ENCODE measurements at regions of chr11 and their contacts with region 1.

Region 1: DNA sequence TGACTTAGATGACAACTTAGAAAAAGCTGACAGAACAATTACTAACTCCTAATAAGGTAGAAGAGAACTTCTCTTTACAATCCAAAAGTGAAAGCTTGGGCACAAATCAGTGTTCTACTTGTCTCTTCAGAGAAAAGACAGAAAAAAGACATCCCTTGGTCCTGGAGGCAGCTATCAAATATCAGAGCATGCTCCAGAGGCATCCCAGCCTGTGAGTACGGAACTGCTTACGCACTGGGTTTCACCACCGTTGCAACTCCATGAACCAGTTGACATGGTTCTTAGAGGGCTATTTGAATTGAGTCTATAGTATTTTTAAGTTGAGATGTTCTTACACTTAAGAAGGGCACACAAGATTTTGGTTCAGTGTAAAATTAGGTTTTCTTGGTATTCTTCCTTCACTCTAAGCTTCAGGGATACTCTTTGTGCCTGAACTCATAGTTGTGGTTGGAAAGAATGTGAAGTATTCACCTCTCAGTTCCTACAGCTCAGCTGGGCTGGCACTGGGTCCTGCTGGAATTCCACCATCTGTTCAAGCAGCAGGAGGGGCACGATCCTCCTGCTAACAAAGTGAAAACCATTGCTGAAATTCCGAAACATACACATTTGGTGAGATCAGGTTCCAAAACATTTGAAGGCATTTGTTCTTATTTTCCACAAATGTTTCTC is 6.3 kb downstream of the AKIP1 start:
- DNase-seq: peak in 1 of 5 donors; percentile 36
- ATAC-seq: peak in 3 of 4 donors; percentile 39 to 64 (median 59)
- H3K4me3 ChIP-seq: no peak overlapping the region
- H3K27ac ChIP-seq: peak overlapping the region in 7 of 12 donors; percentile 3 to 49 (median 27)
- H3K4me1 ChIP-seq: peaks cover 0 to 41% (median 30%) of the 10 kb centered on the region in 12 donors
- H3K27me3 ChIP-seq: no peaks in the 10 kb centered on the region
- CTCF ChIP-seq: no peak
- POLR2A ChIP-seq: no peak

Region 2: GRCh38 chr11:9130297-9130696 is 213.0 kb after region 1 on chr11:
- intact Hi-C with region 1: loop called in 8 of 10 experiments (anchors 5 to 10 kb)
- DNase-seq: no peak
- ATAC-seq: no peak
- H3K4me3 ChIP-seq: no peak overlapping the region
- H3K27ac ChIP-seq: peak overlapping the region in 1 of 12 donors; percentile 10
- H3K4me1 ChIP-seq: peaks cover 0 to 1% (median 0%) of the 10 kb centered on the region in 12 donors
- H3K27me3 ChIP-seq: no peaks in the 10 kb centered on the region
- CTCF ChIP-seq: no peak
- POLR2A ChIP-seq: no peak

Region 3: DNA sequence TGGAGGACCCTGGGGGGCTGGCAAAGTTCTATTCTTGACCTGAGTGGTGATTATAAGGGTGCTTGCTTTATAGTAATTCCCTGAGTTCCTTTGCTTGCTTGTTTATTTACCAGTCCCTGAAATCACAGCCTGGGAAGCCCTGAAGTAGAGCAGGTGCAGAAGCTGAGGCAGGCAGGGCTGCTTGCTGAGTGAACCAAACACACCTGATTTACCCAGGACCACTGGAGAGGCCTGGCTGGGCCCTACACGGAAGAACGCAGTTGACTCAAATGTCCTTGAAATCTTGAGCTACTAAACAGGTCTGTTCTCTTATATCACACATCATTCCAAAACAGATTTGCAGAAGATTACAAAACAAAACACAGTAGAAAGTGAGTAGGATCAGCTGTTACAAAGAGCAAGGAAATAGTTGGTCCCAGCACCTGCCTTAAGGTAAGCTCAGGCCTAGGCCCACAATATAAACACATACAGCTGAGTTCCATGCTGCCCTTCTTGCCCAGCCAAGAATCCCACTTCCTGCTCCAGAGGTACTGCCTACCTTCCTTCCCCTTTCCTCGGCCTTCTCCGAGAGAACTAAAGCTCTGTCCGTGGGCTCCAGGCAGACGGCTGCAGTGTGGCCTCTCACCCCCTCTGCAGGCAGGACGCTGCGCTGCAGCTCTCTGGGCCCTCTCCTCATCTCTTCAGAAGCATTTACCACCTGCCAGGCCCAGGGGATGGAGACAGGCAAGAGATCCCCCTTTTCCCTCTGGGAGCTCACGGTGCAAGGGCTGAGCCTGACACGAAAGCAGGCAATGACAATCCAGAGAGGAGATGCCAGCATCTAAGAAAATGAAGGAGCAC is 220.2 kb after region 1 on chr11:
- intact Hi-C with region 1: loop called in 8 of 10 experiments (anchors 5 to 10 kb)
- DNase-seq: peak; percentile 67 to 82 (median 70)
- ATAC-seq: peak; percentile 84 to 92 (median 91)
- H3K4me3 ChIP-seq: no peak overlapping the region
- H3K27ac ChIP-seq: no peak overlapping the region
- H3K4me1 ChIP-seq: peaks cover 0 to 34% (median 12%) of the 10 kb centered on the region in 12 donors
- H3K27me3 ChIP-seq: no peaks in the 10 kb centered on the region
- CTCF ChIP-seq: peak; percentile 89 to 98 (median 92)
- POLR2A ChIP-seq: no peak